WTC11 (cell line): ENCODE measurements at regions of chr5 and their contacts with region 1.

Region 1: GRCh38 chr5:137778772-137779564 is 24.8 kb upstream of the HNRNPA0 start:
- DNase-seq: no peak
- ATAC-seq: no peak
- H3K4me3 Mint-ChIP-seq: no peak overlapping the region
- H3K27ac Mint-ChIP-seq: no peak overlapping the region
- H3K4me1 Mint-ChIP-seq: no peaks in the 10 kb centered on the region
- H3K27me3 Mint-ChIP-seq: peaks cover 9% of the 10 kb centered on the region
- CTCF ChIP-seq: peak; percentile 57

Region 2: DNA sequence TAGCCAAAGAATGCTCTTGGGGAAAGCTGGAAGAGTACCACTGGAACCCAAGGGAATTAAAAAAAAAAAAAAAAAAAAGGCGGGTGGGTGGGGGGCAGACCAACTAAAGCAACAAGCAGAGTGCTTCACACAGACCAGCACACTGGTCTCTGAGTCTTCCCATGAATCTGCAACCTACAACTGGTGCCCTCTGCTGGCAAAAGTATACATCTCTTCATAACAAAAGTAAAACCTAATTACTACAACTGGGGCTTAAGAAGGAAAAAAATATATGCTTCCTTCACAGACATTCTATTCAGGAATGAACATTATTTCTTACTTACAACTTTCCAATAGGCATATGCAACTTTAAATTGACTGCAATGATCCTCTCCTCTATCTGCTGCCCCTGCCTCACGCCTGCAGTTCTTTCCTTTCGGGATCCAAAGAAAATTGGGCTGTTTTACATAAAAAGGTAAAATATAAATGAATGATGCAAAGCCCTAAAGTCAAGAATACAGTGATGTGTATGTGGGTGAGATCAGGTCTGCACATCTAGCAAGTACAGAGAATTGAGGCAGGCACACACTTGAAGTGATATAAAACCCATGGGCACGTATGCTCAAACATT is 35.8 kb before region 1 on chr5:
- CTCF ChIA-PET with region 1: interaction called, 15 read pairs
- POLR2A ChIA-PET with region 1: no interaction called
- DNase-seq: peak; percentile 43
- ATAC-seq: peak; percentile 87
- H3K4me3 Mint-ChIP-seq: no peak overlapping the region
- H3K27ac Mint-ChIP-seq: no peak overlapping the region
- H3K4me1 Mint-ChIP-seq: peaks cover 8% of the 10 kb centered on the region; the same call in 1 of the 2 replicates
- H3K27me3 Mint-ChIP-seq: no peaks in the 10 kb centered on the region; the same call in 1 of the 2 replicates
- CTCF ChIP-seq: peak; percentile 37; the same call in 1 of the 2 replicates

Region 3: DNA sequence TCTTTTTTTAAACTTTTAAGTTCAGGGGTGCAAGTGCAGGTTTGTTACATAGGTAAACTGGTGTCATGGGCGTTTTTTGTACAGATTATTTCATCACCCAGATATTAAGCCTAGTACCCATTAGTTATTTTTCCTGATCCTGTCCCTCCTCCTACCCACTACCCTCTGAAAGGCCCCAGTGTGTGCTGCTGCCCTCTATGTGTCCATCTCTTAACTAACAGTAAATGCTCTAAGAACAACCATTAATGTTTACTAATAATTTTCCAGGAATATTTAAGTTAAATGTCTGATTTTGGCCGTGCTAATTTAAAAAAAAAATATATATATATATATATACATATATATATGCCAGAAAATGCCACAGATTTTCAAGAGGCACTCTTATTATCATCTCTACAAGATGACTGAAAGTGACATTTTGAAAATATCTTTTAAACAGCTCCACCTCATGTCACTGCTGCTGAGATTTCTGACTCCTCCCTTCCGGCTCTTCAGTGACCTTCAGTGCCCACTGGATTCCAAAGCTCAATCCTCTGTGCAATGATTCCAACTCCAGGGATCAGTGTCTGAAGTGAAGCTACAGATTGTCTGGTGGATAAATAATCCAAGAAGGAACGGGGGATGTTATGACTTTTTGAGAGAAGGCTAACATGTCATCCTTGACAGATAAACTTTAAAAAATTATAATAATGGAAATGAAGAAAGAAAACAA is 21.9 kb after region 1 on chr5:
- CTCF ChIA-PET with region 1: interaction called, 26 read pairs
- POLR2A ChIA-PET with region 1: no interaction called
- DNase-seq: no peak
- ATAC-seq: no peak
- H3K4me3 Mint-ChIP-seq: no peak overlapping the region
- H3K27ac Mint-ChIP-seq: no peak overlapping the region
- H3K4me1 Mint-ChIP-seq: no peaks in the 10 kb centered on the region
- H3K27me3 Mint-ChIP-seq: no peaks in the 10 kb centered on the region
- CTCF ChIP-seq: no peak

Region 4: GRCh38 chr5:137822158-137822764 is 43.3 kb after region 1 on chr5:
- CTCF ChIA-PET with region 1: interaction called, 97 read pairs
- POLR2A ChIA-PET with region 1: no interaction called
- DNase-seq: peak; percentile 63
- ATAC-seq: peak; percentile 92
- H3K4me3 Mint-ChIP-seq: no peak overlapping the region
- H3K27ac Mint-ChIP-seq: no peak overlapping the region
- H3K4me1 Mint-ChIP-seq: peaks cover 19% of the 10 kb centered on the region
- H3K27me3 Mint-ChIP-seq: no peaks in the 10 kb centered on the region
- CTCF ChIP-seq: no peak

Region 5: DNA sequence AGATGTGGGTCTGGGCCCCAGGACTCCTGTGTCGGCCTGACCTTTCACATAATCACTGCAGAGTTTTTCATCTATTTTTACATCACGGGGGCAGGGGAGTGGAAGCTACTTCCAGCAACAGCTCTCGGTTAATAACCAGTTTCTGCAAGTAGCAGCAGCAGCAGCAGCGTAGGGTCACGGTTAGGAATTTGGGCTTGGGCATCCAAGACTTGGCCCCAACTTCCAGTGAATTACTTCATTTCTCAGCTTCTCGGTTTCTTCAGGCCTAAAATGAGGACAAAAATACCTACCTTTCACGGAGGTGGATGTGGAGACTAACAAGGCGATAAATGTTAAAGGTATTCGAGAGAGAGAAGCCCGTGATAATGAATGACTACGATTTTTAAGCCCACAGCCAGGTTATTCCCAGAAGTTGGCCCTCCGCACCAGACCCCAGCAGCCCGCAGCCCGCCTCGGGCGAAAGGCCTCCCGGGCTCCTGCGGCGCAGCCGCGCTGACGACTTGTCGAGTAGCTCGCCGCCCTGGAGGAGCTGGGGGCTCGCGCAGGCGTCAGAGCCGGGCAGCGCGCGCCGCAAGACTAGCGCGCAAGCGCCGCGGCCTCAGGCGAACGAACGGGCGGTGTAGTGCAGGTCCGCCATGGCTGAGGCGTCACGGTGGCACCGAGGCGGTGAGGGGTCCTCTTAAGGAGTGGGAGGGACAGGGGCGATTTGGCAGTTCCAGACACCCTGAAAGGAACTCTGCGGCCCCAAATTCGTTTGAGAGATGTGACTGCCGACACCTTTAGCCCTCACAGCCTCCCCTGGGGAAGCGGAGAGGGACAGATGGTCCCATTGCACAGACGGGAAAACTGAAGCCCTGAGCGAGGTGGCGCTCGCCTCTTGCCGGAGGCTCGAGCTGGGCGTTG is 110.1 kb after region 1 on chr5 and contains the start of gene PKD2L2:
- CTCF ChIA-PET with region 1: interaction called, 20 read pairs
- POLR2A ChIA-PET with region 1: no interaction called
- DNase-seq: peak; percentile 83
- ATAC-seq: peak; percentile 97
- H3K4me3 Mint-ChIP-seq: peak within 1 kb of the TSS; percentile 65
- H3K27ac Mint-ChIP-seq: peak within 1 kb of the TSS; percentile 54; the same call in 1 of the 2 replicates
- H3K4me1 Mint-ChIP-seq: peaks cover 13% of the 10 kb centered on the region
- H3K27me3 Mint-ChIP-seq: no peaks in the 10 kb centered on the region
- CTCF ChIP-seq: no peak
- total RNA-seq, gene PKD2L2: 0.21 TPM in 1 of 3 replicates, not detected in the others